CD8-positive, alpha-beta T cell (primary cell): ENCODE measurements at regions of chr4 and their contacts with region 1.

Region 1: DNA sequence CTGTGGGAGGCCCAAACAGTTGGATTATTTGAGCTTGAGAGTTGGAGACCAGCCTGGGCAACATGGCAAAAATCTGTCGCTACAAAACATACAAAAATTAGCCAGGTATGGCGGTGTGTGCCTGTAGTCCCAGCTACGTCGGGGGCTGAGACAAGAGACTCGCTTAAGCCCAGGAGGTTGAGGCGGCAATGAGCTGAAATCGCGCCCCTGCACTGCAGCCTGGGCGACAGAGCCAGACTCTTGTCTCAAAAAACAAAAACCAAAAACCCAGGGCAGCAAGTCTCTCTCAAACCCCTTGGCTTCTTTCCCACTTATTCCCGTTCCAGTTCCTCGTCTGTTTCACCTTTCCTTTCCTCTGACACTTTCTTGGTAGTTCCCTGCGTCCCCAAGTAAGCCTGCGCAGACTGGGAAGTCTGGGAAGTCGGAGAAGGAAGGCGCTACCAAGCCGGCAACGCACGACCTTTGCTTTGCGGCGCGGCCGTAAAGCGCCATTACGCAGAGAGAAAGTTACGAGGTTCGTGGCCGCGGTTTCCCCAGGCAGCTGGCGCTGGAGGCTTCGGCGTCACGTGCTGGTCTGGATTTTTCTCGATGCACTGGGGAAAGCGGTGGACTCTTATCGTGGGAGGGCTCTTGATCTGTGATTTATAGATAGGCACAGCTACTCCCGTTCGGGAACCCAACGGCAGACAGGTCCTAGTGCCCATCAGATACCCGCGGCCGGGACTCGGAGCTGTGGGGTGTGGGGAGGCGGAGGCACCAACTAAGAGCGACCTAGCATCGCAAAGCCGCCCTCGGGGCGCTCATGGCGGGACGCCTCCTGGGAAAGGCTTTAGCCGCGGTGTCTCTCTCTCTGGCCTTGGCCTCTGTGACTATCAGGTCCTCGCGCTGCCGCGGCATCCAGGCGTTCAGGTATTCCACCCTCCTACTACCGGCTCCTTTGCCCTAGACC is at the start of gene NUDT9:
- DNase-seq: peak; percentile 76 to 94 (median 86)
- ATAC-seq: peak; percentile 82
- H3K4me3 ChIP-seq: peak within 1 kb of the TSS; percentile 76 to 94
- H3K4me3 Mint-ChIP-seq: peak within 1 kb of the TSS; percentile 98
- H3K27ac ChIP-seq: peak within 1 kb of the TSS; percentile 86 to 92
- H3K27ac Mint-ChIP-seq: peak within 1 kb of the TSS; percentile 99
- H3K4me1 ChIP-seq: peaks cover 18% of the 10 kb centered on the region
- H3K4me1 Mint-ChIP-seq: peaks cover 39% of the 10 kb centered on the region
- H3K27me3 ChIP-seq: no peaks in the 10 kb centered on the region
- H3K27me3 Mint-ChIP-seq: no peaks in the 10 kb centered on the region
- CTCF ChIP-seq: no peak
- total RNA-seq, gene NUDT9: 4.9 to 6.4 TPM

Region 2: DNA sequence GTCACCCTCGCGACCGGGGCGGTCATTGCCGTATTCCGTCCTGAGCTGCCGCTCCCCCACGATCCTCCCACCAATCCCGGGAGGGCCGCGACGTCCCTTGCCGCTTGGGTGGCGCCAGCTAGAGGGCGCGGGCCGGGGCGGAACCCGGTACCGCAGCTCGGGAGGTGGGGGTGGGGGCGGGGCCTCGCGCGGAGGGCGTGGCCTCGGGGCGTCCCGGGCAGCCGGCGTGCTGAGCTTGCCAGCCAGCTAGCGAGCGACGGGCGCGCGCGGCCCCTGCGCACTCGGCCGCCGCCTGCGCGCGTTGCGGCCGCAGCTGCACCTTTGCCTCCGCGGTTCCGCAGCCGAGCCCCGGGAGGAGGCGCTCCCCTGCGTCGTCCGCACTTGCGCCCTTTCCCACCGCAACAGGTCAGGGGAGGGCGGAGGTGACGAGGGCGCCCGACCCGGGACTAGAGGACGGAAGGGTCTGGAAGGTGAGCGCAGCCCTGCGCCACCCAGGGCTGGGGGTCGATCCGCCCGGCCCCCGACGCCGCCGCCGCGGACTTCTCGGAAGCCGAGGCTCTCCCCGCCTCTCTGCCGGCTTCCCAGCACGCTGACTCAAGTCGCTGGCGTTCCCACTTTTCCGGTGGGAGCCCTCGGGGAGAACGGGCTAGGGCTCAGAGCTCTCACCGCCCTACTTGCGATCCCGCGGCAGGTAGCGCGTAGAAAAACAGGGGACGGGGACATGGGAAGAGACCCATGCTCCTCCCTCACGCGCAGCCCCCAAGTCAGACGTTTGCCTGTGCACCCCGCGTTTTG is 487.4 kb before region 1 on chr4 and contains the start of gene AFF1:
- CTCF ChIA-PET with region 1: interaction called, 3 read pairs
- POLR2A ChIA-PET with region 1: interaction called, 4 read pairs
- intact Hi-C with region 1: loop called (anchors 1 to 2 kb)
- DNase-seq: peak; percentile 74 to 97 (median 85)
- ATAC-seq: peak; percentile 71
- H3K4me3 ChIP-seq: peak within 1 kb of the TSS; percentile 76 to 87
- H3K4me3 Mint-ChIP-seq: peak within 1 kb of the TSS; percentile 88
- H3K27ac ChIP-seq: peak within 1 kb of the TSS; percentile 81 to 85
- H3K27ac Mint-ChIP-seq: peak within 1 kb of the TSS; percentile 95
- H3K4me1 ChIP-seq: peaks cover 42% of the 10 kb centered on the region
- H3K4me1 Mint-ChIP-seq: peaks cover 50% of the 10 kb centered on the region
- H3K27me3 ChIP-seq: no peaks in the 10 kb centered on the region
- H3K27me3 Mint-ChIP-seq: no peaks in the 10 kb centered on the region
- CTCF ChIP-seq: peak; percentile 44
- total RNA-seq, gene AFF1: 32.3 to 33.8 TPM

Region 3: DNA sequence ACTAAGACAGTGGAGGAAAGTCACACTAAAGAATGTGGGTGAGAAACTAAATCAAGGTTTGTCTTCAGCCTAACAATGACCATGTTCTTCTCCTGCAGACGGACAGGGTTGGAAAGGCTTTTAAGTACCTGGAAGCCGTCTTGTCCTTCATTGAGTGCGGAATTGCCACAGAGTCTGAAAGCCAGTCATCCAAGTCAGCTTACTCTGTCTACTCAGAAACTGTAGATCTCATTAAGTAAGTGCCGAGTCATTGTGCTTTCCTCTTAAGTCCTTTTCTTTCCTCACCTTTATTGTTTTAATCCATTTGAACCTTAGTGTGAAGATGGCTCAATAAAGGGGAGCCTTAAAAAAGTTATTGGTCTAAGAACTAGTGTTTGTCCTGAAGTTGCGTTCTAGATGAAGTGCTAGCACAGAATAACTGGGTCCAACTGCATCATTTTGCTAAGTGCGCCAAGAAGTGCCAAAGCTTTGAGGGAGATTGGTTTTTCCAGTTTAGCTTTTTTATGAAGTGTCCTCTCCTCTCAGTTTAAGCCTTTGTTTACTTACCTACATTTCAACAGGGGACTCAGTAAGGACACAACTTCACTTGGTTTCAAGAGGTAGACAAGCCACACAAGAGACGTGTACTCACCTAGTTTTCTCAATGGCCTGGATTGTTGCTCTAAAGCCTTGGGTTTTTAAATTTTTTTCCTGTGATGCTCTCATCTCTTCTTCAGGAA is 291.2 kb before region 1 on chr4:
- CTCF ChIA-PET with region 1: no interaction called
- POLR2A ChIA-PET with region 1: no interaction called
- intact Hi-C with region 1: no loop called
- DNase-seq: no peak
- ATAC-seq: no peak
- H3K4me3 ChIP-seq: no peak overlapping the region
- H3K4me3 Mint-ChIP-seq: no peak overlapping the region
- H3K27ac ChIP-seq: no peak overlapping the region
- H3K27ac Mint-ChIP-seq: no peak overlapping the region
- H3K4me1 ChIP-seq: no peaks in the 10 kb centered on the region
- H3K4me1 Mint-ChIP-seq: no peaks in the 10 kb centered on the region
- H3K27me3 ChIP-seq: no peaks in the 10 kb centered on the region
- H3K27me3 Mint-ChIP-seq: no peaks in the 10 kb centered on the region
- CTCF ChIP-seq: no peak

Region 4: GRCh38 chr4:87220094-87220822 is 202.1 kb before region 1 on chr4 and contains the start of gene KLHL8:
- CTCF ChIA-PET with region 1: no interaction called
- POLR2A ChIA-PET with region 1: interaction called, 3 read pairs
- intact Hi-C with region 1: loop called in 1 of 2 experiments (anchors 1 kb)
- DNase-seq: peak; percentile 75 to 94 (median 85)
- ATAC-seq: peak; percentile 90
- H3K4me3 ChIP-seq: peak within 1 kb of the TSS; percentile 91 to 99
- H3K4me3 Mint-ChIP-seq: peak within 1 kb of the TSS; percentile 94
- H3K27ac ChIP-seq: peak within 1 kb of the TSS; percentile 86 to 92
- H3K27ac Mint-ChIP-seq: peak within 1 kb of the TSS; percentile 91
- H3K4me1 ChIP-seq: peaks cover 9% of the 10 kb centered on the region
- H3K4me1 Mint-ChIP-seq: peaks cover 18% of the 10 kb centered on the region
- H3K27me3 ChIP-seq: no peaks in the 10 kb centered on the region
- H3K27me3 Mint-ChIP-seq: no peaks in the 10 kb centered on the region
- CTCF ChIP-seq: peak; percentile 39
- total RNA-seq, gene KLHL8: 8.2 to 8.7 TPM

Region 5: DNA sequence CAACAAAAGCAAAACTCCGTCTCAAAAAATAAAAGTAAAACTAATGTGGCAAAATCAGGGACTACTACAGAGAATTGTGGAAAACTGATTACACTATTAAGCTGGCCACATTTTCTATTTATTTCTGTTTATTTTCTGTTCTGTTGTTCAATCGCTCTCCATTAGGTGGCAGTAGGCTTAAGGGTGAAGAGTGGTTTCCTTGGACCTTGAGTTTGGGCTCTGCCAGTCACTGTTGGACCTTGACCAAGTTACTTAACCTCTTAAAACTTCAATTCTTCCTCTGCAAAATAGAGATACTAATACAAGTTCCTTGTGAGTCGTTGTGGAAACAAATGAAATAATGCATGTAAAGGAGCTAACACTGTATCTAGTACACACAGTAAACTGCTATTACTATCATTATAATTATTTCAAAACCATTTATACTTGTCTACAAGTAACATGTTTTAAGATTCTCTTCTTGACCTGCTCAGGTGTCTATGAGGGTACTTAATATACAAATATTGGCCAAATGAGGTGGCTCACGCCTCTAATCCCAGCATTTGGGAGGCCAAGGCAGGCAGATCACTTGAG is 46.6 kb before region 1 on chr4:
- CTCF ChIA-PET with region 1: interaction called, 4 read pairs
- POLR2A ChIA-PET with region 1: no interaction called
- intact Hi-C with region 1: loop called in 1 of 2 experiments (anchors 10 kb)
- DNase-seq: peak in 2 of 9 experiments; percentile 51 to 66
- ATAC-seq: peak; percentile 63
- H3K4me3 ChIP-seq: no peak overlapping the region
- H3K4me3 Mint-ChIP-seq: no peak overlapping the region
- H3K27ac ChIP-seq: no peak overlapping the region
- H3K27ac Mint-ChIP-seq: no peak overlapping the region
- H3K4me1 ChIP-seq: no peaks in the 10 kb centered on the region
- H3K4me1 Mint-ChIP-seq: peaks cover 5% of the 10 kb centered on the region
- H3K27me3 ChIP-seq: no peaks in the 10 kb centered on the region
- H3K27me3 Mint-ChIP-seq: no peaks in the 10 kb centered on the region
- CTCF ChIP-seq: peak; percentile 76

Region 6: GRCh38 chr4:87406462-87406861 is 15.9 kb before region 1 on chr4:
- CTCF ChIA-PET with region 1: interaction called, 3 read pairs
- POLR2A ChIA-PET with region 1: interaction called, 3 read pairs
- intact Hi-C with region 1: loop called in 1 of 2 experiments (anchors 2 kb)
- DNase-seq: peak in 2 of 9 experiments; percentile 9 to 42
- ATAC-seq: peak; percentile 57
- H3K4me3 ChIP-seq: no peak overlapping the region
- H3K4me3 Mint-ChIP-seq: peak overlapping the region; percentile 69
- H3K27ac ChIP-seq: peak overlapping the region in 1 of 2 experiments; percentile 23
- H3K27ac Mint-ChIP-seq: peak overlapping the region; percentile 86
- H3K4me1 ChIP-seq: peaks cover 11% of the 10 kb centered on the region
- H3K4me1 Mint-ChIP-seq: peaks cover 22% of the 10 kb centered on the region
- H3K27me3 ChIP-seq: no peaks in the 10 kb centered on the region
- H3K27me3 Mint-ChIP-seq: peaks cover 23% of the 10 kb centered on the region
- CTCF ChIP-seq: no peak

Region 7: GRCh38 chr4:87592124-87592523 is 169.7 kb after region 1 on chr4:
- CTCF ChIA-PET with region 1: no interaction called
- POLR2A ChIA-PET with region 1: no interaction called
- intact Hi-C with region 1: no loop called
- DNase-seq: no peak
- ATAC-seq: no peak
- H3K4me3 ChIP-seq: no peak overlapping the region
- H3K4me3 Mint-ChIP-seq: no peak overlapping the region
- H3K27ac ChIP-seq: no peak overlapping the region
- H3K27ac Mint-ChIP-seq: no peak overlapping the region
- H3K4me1 ChIP-seq: no peaks in the 10 kb centered on the region
- H3K4me1 Mint-ChIP-seq: no peaks in the 10 kb centered on the region
- H3K27me3 ChIP-seq: no peaks in the 10 kb centered on the region
- H3K27me3 Mint-ChIP-seq: no peaks in the 10 kb centered on the region
- CTCF ChIP-seq: no peak

Region 8: DNA sequence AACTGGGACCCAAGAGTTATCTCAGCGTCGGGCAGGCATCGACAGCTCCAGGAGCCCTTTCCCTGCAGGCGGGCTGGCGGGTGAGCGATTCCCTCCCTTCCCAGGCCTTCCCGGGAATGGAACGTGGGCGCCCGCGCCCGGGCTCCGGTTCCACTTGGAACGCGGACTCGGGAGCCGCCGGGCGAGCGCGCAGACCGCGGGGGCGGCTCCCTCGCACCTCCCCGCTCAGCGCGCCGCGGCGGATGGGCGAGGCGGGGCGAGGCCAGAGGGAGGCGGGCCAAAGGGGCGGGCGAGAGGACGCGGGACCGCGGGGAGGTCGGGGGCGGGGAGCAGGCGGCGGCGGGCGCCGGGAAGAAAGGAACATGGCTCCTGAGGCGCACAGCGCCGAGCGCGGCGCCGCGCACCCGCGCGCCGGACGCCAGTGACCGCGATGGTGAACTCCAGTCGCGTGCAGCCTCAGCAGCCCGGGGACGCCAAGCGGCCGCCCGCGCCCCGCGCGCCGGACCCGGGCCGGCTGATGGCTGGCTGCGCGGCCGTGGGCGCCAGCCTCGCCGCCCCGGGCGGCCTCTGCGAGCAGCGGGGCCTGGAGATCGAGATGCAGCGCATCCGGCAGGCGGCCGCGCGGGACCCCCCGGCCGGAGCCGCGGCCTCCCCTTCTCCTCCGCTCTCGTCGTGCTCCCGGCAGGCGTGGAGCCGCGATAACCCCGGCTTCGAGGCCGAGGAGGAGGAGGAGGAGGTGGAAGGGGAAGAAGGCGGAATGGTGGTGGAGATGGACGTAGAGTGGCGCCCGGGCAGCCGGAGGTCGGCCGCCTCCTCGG is 585.1 kb after region 1 on chr4 and contains the start of gene PKD2:
- CTCF ChIA-PET with region 1: no interaction called
- POLR2A ChIA-PET with region 1: no interaction called
- intact Hi-C with region 1: no loop called
- DNase-seq: peak; percentile 28 to 84 (median 74)
- ATAC-seq: peak; percentile 93
- H3K4me3 ChIP-seq: peak within 1 kb of the TSS; percentile 44 to 50
- H3K4me3 Mint-ChIP-seq: peak within 1 kb of the TSS; percentile 88
- H3K27ac ChIP-seq: no peak within 1 kb of the TSS
- H3K27ac Mint-ChIP-seq: peak within 1 kb of the TSS; percentile 13
- H3K4me1 ChIP-seq: peaks cover 14% of the 10 kb centered on the region
- H3K4me1 Mint-ChIP-seq: peaks cover 30% of the 10 kb centered on the region
- H3K27me3 ChIP-seq: no peaks in the 10 kb centered on the region
- H3K27me3 Mint-ChIP-seq: peaks cover 9% of the 10 kb centered on the region
- CTCF ChIP-seq: no peak
- total RNA-seq, gene PKD2: 3.0 to 3.2 TPM

Region 9: DNA sequence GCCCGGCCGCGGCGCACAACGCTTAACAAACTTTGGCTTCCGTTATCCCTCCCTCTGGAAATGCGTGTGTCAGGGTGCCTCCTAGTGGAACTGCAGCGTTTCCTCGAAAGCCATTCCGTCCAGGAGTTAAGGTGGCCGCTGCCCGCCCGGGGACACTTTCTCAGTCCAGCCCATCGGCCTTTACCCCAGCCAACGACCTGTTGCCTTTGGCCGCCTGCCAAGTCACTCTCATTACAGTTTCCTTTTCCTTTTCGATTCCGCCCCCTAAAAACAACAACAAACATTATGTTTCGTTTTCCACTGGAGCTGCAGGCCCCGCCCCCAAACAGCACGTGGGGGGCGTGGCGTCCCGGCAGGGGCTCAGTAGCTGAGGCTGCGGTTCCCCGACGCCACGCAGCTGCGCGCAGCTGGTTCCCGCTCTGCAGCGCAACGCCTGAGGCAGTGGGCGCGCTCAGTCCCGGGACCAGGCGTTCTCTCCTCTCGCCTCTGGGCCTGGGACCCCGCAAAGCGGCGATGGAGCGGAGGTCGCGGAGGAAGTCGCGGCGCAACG is 1034.5 kb after region 1 on chr4 and contains the start of gene HERC5:
- CTCF ChIA-PET with region 1: no interaction called
- POLR2A ChIA-PET with region 1: no interaction called
- intact Hi-C with region 1: loop called in 1 of 2 experiments (anchors 10 kb)
- DNase-seq: peak; percentile 83 to 96 (median 91)
- ATAC-seq: peak; percentile 95
- H3K4me3 ChIP-seq: peak within 1 kb of the TSS; percentile 79 to 87
- H3K4me3 Mint-ChIP-seq: peak within 1 kb of the TSS; percentile 100
- H3K27ac ChIP-seq: peak within 1 kb of the TSS; percentile 63 to 74
- H3K27ac Mint-ChIP-seq: peak within 1 kb of the TSS; percentile 100
- H3K4me1 ChIP-seq: peaks cover 13% of the 10 kb centered on the region
- H3K4me1 Mint-ChIP-seq: peaks cover 33% of the 10 kb centered on the region
- H3K27me3 ChIP-seq: no peaks in the 10 kb centered on the region
- H3K27me3 Mint-ChIP-seq: no peaks in the 10 kb centered on the region
- CTCF ChIP-seq: no peak
- total RNA-seq, gene HERC5: 13.2 to 13.5 TPM